A549 (cell line): ENCODE measurements at regions of chr19 and their contacts with region 1.

Region 1: DNA sequence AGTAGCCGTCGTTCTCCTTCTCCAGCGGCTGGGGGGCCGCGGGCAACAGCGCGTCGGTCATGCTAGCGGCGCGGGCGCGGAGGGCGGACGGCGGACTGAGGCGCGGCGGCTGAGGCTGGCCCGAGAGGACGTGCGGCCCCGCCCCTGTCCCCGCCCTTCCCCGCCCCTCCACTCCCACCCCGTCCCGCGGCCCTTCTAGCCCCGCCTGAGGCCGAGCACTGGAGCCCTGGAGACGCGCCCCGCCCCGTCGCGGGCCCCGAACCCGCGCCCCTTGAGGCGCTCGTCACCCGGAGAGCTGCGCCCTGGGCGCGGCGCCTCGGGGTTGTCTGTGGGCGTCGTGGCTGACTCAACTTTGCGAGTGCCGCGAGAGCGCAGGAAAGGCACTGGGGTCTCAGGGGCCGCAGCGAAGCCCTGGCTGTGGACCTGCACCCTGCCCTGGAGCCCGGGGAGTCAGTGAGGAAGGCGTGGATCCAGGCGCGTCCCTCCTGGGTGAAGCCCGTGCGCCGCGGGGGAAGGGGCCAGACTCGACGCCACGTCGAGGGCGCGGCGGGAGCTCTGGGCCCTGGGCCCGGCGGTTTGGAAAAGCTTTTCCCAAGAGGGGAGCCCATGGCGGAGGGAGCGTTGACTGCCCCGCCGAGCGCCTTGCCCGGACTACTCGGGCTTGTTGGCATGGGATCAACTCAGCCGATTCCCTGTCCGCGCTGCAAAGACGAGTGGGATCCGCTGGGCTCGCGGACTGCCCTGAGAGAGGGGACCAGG is at the start of gene RHPN2:
- DNase-seq: peak; percentile 93 to 94
- ATAC-seq: peak; percentile 85 to 91
- H3K4me3 ChIP-seq: peak within 1 kb of the TSS; percentile 84
- H3K27ac ChIP-seq: peak within 1 kb of the TSS; percentile 90 to 93
- H3K4me1 ChIP-seq: peaks cover 61% of the 10 kb centered on the region
- CTCF ChIP-seq: no peak
- EP300 ChIP-seq: no peak
- POLR2A ChIP-seq: peak; percentile 90
- RAD21 ChIP-seq: peak in 1 of 2 experiments; percentile 50; a peak in 3 of 5 replicates
- polyA plus RNA-seq, gene RHPN2: 140 and 162 TPM in 2 replicates

Region 2: DNA sequence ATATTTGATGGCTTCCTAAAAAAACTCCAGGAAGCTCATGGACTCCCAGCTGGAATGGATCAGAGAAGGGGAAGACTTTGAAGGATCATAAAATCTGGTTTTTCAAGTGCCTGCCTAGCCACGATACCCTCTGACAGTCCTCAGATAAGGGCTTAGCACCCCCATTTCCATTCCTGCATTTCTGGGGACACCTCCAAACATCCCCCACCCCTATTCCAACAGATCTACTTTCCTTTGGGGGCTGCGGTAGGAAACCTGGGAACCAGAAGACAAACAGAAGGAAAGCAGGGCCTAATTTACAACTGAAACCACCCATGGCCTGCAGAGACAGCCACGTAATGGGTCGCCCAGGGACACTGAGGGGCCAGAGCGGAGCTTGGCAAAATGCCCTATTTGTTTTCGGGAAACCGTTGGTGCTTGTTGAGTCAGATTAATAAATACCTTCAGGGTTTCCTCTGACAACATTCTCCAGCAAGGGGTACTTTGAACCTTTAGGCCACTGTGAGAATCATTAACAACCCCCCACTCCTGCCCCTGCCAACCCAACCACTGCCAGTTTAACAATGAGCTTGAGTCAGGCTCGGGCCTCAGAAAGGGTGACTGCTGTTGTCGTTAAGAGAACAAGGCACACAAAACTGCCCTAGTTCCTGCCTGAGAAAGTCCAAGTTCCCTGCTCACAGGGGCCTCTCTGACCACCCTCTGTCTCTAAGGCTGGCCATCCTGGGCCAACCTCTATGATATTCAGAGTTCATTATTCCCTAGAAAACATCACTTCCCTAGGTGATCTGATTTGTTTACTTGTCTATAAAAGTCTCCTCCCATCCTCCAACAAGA is 23.8 kb before region 1 on chr19:
- CTCF ChIA-PET with region 1: interaction called, 4 read pairs
- POLR2A ChIA-PET with region 1: interaction called, 15 read pairs
- DNase-seq: peak; percentile 100
- ATAC-seq: peak; percentile 95 to 96
- H3K4me3 ChIP-seq: peak overlapping the region; percentile 14; the same call in 2 of the 3 replicates
- H3K27ac ChIP-seq: peak overlapping the region; percentile 87 to 92
- H3K4me1 ChIP-seq: peaks cover 53% of the 10 kb centered on the region
- CTCF ChIP-seq: no peak
- EP300 ChIP-seq: peak; percentile 93 to 97
- POLR2A ChIP-seq: no peak
- RAD21 ChIP-seq: peak; percentile 37 to 76

Region 3: GRCh38 chr19:33047406-33047805 is 17.6 kb before region 1 on chr19:
- CTCF ChIA-PET with region 1: interaction called, 14 read pairs
- POLR2A ChIA-PET with region 1: interaction called, 12 read pairs
- DNase-seq: peak in 1 of 2 experiments; percentile 65
- ATAC-seq: no peak
- H3K4me3 ChIP-seq: no peak overlapping the region
- H3K27ac ChIP-seq: peak overlapping the region in 1 of 2 experiments; percentile 54; a peak in 3 of 6 replicates
- H3K4me1 ChIP-seq: peaks cover 58% of the 10 kb centered on the region
- CTCF ChIP-seq: no peak
- EP300 ChIP-seq: no peak
- POLR2A ChIP-seq: no peak
- RAD21 ChIP-seq: no peak

Region 4: GRCh38 chr19:33052352-33052972 is 12.5 kb before region 1 on chr19:
- CTCF ChIA-PET with region 1: interaction called, 14 read pairs
- POLR2A ChIA-PET with region 1: interaction called, 16 read pairs
- DNase-seq: peak in 1 of 2 experiments; percentile 66
- ATAC-seq: peak; percentile 19 to 45
- H3K4me3 ChIP-seq: no peak overlapping the region
- H3K27ac ChIP-seq: peak overlapping the region; percentile 49 to 77
- H3K4me1 ChIP-seq: peaks cover 88% of the 10 kb centered on the region
- CTCF ChIP-seq: no peak
- EP300 ChIP-seq: no peak
- POLR2A ChIP-seq: no peak
- RAD21 ChIP-seq: no peak; a peak in 1 of 5 replicates

Region 5: GRCh38 chr19:33075519-33075918 is 10.5 kb after region 1 on chr19:
- CTCF ChIA-PET with region 1: interaction called, 25 read pairs
- POLR2A ChIA-PET with region 1: interaction called, 16 read pairs
- DNase-seq: no peak
- ATAC-seq: no peak
- H3K4me3 ChIP-seq: no peak overlapping the region
- H3K27ac ChIP-seq: peak overlapping the region; percentile 11 to 92; a peak in 4 of 6 replicates
- H3K4me1 ChIP-seq: peaks cover 42% of the 10 kb centered on the region
- CTCF ChIP-seq: no peak
- EP300 ChIP-seq: no peak
- POLR2A ChIP-seq: no peak
- RAD21 ChIP-seq: no peak

Region 6: GRCh38 chr19:33080761-33081681 is 16.1 kb after region 1 on chr19 and contains the start of gene GPATCH1:
- CTCF ChIA-PET with region 1: interaction called, 25 read pairs
- POLR2A ChIA-PET with region 1: interaction called, 16 read pairs
- DNase-seq: peak; percentile 96 to 99
- ATAC-seq: peak; percentile 90
- H3K4me3 ChIP-seq: peak within 1 kb of the TSS; percentile 76
- H3K27ac ChIP-seq: peak within 1 kb of the TSS; percentile 88 to 92
- H3K4me1 ChIP-seq: peaks cover 38% of the 10 kb centered on the region
- CTCF ChIP-seq: no peak
- EP300 ChIP-seq: no peak; a peak in 1 of 5 replicates
- POLR2A ChIP-seq: peak; percentile 79
- RAD21 ChIP-seq: peak; percentile 33 to 54; a peak in 4 of 5 replicates
- polyA plus RNA-seq, gene GPATCH1: 19.0 and 24.2 TPM in 2 replicates